ENCODE measurements at regions of chr4 and their contacts with region 1.

Region 1: DNA sequence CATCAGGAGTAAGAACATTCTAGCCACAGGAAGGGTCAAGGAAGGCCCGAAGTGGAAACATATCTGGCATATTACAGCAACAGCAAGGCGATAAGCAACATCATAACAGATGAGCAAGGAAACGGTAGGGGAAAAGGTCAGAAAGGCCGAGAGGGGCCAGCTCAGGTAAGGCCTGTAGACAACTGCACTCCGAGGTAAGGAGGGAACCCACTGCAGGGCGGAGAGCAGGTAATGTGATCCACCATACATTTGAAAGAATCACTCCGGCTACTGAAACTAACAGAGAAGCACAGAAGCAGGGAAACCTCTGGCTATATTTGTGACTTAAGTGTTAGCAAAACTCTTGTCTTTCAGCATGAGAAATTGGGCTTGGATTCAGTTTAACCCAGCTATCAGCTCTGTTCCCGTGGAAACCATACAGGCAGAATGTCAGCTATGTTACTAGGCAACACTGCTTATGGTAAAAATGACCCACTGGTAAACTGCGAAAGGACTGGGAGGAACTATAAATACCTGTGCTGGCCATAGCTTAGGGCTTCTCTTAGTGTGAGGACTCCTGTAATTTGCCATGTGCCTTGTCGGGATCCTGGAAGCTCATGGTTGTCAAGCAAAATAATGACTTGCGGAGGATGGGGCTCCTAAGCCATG is 31.0 kb downstream of the FRYL start:
- DNase-seq: no peak
- ATAC-seq: no peak
- H3K4me3 ChIP-seq: no peak overlapping the region
- H3K4me3 Mint-ChIP-seq: peak overlapping the region in 1 of 3 donors; percentile 6
- H3K27ac ChIP-seq: no peak overlapping the region
- H3K27ac Mint-ChIP-seq: peak overlapping the region in 1 of 2 donors; percentile 1
- H3K4me1 ChIP-seq: peaks cover 6 to 16% of the 10 kb centered on the region in 2 experiments
- H3K4me1 Mint-ChIP-seq: peaks cover 70 to 80% (median 79%) of the 10 kb centered on the region in 3 donors
- H3K27me3 ChIP-seq: no peaks in the 10 kb centered on the region
- H3K27me3 Mint-ChIP-seq: no peaks in the 10 kb centered on the region

Region 2: DNA sequence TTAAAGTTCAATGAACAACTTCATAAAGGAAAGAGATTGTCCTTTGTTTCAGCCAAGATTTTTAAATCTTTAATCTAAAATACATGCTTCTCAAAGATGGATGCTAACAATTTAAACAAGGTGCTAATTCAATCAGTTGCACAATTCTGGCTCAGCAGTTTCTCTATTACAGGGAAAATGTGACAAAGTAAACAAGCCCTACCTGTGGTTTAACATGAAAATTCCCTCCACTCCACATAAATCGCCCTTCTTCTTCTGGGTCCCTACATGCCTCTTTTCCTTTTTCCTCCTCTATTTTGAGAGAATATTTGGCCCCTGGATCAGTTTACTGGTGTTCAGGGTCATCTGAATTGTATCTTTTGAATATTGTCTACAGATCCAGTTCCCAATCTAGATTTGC is 49.6 kb before region 1 on chr4:
- CTCF ChIA-PET with region 1: interaction called in 1 of 2 experiments, 10 read pairs
- POLR2A ChIA-PET with region 1: no interaction called
- DNase-seq: no peak
- ATAC-seq: no peak
- H3K4me3 ChIP-seq: no peak overlapping the region
- H3K4me3 Mint-ChIP-seq: peak overlapping the region in 2 of 3 donors; percentile 15 to 23
- H3K27ac ChIP-seq: no peak overlapping the region
- H3K27ac Mint-ChIP-seq: peak overlapping the region in 1 of 2 donors; percentile 59
- H3K4me1 ChIP-seq: peaks cover 0 to 6% of the 10 kb centered on the region in 2 experiments
- H3K4me1 Mint-ChIP-seq: peaks cover 73 to 77% (median 76%) of the 10 kb centered on the region in 3 donors
- H3K27me3 ChIP-seq: no peaks in the 10 kb centered on the region
- H3K27me3 Mint-ChIP-seq: no peaks in the 10 kb centered on the region

Region 3: GRCh38 chr4:48779998-48780742 is 31.1 kb after region 1 on chr4 and contains the start of gene FRYL:
- CTCF ChIA-PET with region 1: interaction called in 1 of 2 experiments, 3 read pairs
- POLR2A ChIA-PET with region 1: interaction called in 1 of 2 experiments, 12 read pairs
- DNase-seq: peak; percentile 94 to 100 (median 97)
- ATAC-seq: peak; percentile 88 to 90 (median 88)
- H3K4me3 ChIP-seq: peak within 1 kb of the TSS; percentile 83 to 99
- H3K4me3 Mint-ChIP-seq: peak within 1 kb of the TSS; percentile 75 to 94 (median 90)
- H3K27ac ChIP-seq: peak within 1 kb of the TSS; percentile 69
- H3K27ac Mint-ChIP-seq: peak within 1 kb of the TSS; percentile 89 to 95
- H3K4me1 ChIP-seq: peaks cover 10 to 29% of the 10 kb centered on the region in 2 experiments
- H3K4me1 Mint-ChIP-seq: peaks cover 44 to 47% (median 45%) of the 10 kb centered on the region in 3 donors
- H3K27me3 ChIP-seq: no peaks in the 10 kb centered on the region
- H3K27me3 Mint-ChIP-seq: no peaks in the 10 kb centered on the region
- total RNA-seq, gene FRYL: 86.3 to 143 (median 111) TPM

Region 4: GRCh38 chr4:48792348-48793006 is 43.4 kb after region 1 on chr4:
- CTCF ChIA-PET with region 1: no interaction called
- POLR2A ChIA-PET with region 1: no interaction called
- DNase-seq: no peak
- ATAC-seq: no peak
- H3K4me3 ChIP-seq: no peak overlapping the region
- H3K4me3 Mint-ChIP-seq: no peak overlapping the region
- H3K27ac ChIP-seq: no peak overlapping the region
- H3K27ac Mint-ChIP-seq: no peak overlapping the region
- H3K4me1 ChIP-seq: no peaks in the 10 kb centered on the region
- H3K4me1 Mint-ChIP-seq: no peaks in the 10 kb centered on the region
- H3K27me3 ChIP-seq: no peaks in the 10 kb centered on the region
- H3K27me3 Mint-ChIP-seq: no peaks in the 10 kb centered on the region

Measured in T-cell (primary cell).